GM12878 (cell line): ENCODE measurements at regions of chr16 and their contacts with region 1.

Region 1: DNA sequence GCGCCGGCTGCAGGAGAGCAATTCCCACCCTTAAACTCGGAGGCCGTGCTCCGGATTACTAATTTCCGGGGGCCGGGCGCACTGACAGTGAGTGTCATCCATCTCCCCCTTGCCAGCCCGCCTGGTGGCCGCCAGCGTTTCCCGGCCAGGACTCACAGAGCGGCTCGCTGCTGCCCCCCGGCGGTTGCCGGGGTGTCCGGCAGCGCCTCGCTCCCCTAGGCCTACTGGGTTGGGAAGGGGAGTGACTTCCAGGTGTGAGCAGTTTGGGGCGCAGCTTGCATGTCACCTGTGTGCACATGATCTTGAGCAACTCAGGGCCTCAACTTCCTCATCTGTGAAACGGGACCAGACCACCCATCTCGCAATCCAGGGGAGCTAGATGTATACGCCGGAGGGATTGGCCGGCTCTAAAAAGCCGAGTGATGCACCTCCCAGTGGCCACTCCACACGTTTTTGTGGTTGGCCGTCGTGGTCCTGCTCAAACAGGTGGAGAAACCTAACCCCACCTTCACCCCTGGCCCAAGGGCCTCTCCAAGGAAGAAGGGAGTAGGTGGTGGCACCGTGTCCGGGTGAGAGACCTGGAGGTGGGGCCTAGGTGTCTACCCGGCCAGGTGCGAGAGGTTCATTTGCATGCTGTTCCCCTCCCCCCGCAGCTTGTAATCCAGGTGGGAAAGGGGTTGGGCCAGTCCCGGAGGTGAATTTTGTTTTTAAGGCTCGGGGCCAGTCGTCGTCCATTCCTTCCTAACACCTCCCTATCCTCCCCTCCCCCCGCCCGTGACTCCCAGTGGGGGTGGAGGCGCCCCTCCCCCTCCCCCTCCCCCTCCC is 2.4 kb upstream of the GSE1 start:
- DNase-seq: no peak
- ATAC-seq: peak; percentile 70
- H3K4me3 ChIP-seq: peak overlapping the region; percentile 70; the same call in 1 of the 2 replicates
- H3K27ac ChIP-seq: no peak overlapping the region
- H3K4me1 ChIP-seq: peaks cover 35% of the 10 kb centered on the region
- H3K27me3 ChIP-seq: no peaks in the 10 kb centered on the region
- CTCF ChIP-seq: peak; percentile 96 to 99 (median 97)
- EP300 ChIP-seq: no peak
- POLR2A ChIP-seq: no peak
- RAD21 ChIP-seq: peak; percentile 93

Region 2: GRCh38 chr16:85270374-85270773 is 340.3 kb before region 1 on chr16:
- CTCF ChIA-PET with region 1: no interaction called
- POLR2A ChIA-PET with region 1: no interaction called
- RAD21 ChIA-PET with region 1: no interaction called
- SMC1A ChIA-PET with region 1: no interaction called
- in situ Hi-C with region 1: no loop called
- intact Hi-C with region 1: no loop called
- DNase-seq: no peak
- ATAC-seq: no peak
- H3K4me3 ChIP-seq: no peak overlapping the region
- H3K27ac ChIP-seq: no peak overlapping the region
- H3K4me1 ChIP-seq: no peaks in the 10 kb centered on the region
- H3K27me3 ChIP-seq: no peaks in the 10 kb centered on the region; a peak in 1 of 4 replicates
- CTCF ChIP-seq: no peak
- EP300 ChIP-seq: no peak
- POLR2A ChIP-seq: no peak
- RAD21 ChIP-seq: no peak

Region 3: DNA sequence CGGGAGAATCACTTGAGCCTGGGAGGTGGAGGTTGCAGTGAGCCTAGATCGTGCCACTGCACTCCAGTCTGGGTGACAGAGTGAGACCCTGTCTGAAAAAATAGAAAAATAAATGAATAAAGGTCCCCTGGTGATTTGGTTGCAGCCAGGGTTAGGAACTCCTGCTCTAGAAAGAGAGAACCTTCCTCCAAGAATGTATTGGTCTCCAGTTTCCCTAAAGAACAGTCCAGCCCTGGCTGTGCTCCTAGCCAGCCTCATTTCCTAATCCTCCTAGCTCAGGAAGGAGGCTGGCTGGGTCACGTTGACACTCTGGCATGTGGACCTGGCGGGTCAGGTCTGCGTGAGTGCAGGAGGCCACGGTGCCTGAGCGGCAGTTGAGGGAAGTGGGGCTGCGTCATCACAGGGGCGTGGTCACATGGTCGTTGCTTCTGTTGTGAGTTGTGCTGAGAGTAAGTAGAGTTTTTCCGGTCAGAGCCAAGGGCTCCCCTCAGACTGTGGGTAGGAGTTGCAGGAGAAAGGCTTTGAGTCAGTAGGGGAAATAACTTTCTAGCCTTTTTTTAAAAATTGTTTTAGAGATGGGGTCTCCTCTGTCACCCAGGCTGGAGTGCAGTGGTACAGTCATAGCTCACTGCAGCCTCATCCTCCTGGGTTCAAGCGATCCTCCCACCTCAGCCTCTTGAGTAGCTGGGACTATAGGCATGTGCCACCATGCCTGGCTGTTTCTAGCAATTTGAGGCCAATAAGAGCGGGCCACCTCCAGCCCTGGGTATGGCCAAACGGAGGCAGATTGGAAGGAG is 304.5 kb before region 1 on chr16:
- CTCF ChIA-PET with region 1: no interaction called
- POLR2A ChIA-PET with region 1: no interaction called
- RAD21 ChIA-PET with region 1: no interaction called
- SMC1A ChIA-PET with region 1: no interaction called
- in situ Hi-C with region 1: no loop called
- intact Hi-C with region 1: loop called (anchors 5 kb)
- DNase-seq: peak; percentile 30
- ATAC-seq: peak; percentile 69
- H3K4me3 ChIP-seq: no peak overlapping the region
- H3K27ac ChIP-seq: no peak overlapping the region
- H3K4me1 ChIP-seq: peaks cover 22% of the 10 kb centered on the region
- H3K27me3 ChIP-seq: peaks cover 0 to 2% of the 10 kb centered on the region in 2 experiments; a peak in 1 of 4 replicates
- CTCF ChIP-seq: no peak
- EP300 ChIP-seq: no peak
- POLR2A ChIP-seq: no peak; the same call in 1 of the 2 replicates
- RAD21 ChIP-seq: no peak

Region 4: DNA sequence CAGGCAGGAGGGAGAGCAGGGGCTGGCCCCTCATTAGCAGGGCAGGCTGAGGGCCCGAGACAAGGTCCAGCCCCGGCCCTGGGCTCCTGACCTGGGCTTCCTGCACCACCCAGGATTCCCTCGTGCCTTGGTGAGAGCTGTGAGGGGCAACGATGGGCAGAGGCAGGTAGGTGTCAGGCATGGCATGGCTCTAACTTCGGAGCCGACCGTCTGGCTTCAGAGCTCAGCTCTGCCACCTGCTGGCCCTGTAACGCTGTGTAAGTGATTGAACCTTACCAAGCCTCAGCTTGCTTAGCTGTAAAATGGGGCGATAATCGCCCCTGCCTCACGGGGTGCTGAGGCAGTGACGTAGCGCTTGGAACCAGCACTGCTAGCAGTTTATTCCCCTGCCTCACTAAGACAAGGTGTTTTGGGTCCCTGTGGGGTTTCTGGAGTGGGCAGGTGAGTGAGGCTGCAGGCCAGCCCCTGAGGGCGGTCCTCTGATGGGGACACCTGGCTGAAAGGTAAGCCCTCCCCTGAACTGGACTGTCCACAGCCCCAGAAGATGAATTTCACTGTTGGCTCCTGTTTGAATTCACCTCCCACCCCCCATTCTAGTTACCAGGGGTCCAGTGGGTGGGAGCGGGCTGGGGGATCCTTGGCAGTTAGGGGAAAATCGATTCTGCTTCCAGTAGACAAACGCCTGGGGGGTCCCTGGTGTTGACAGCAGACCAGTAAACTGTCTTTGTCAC is 182.4 kb before region 1 on chr16:
- CTCF ChIA-PET with region 1: interaction called, 17 read pairs
- POLR2A ChIA-PET with region 1: no interaction called
- RAD21 ChIA-PET with region 1: interaction called, 3 read pairs
- SMC1A ChIA-PET with region 1: interaction called, 7 read pairs
- in situ Hi-C with region 1: loop called (anchors 25 kb)
- intact Hi-C with region 1: no loop called
- DNase-seq: no peak
- ATAC-seq: peak; percentile 99
- H3K4me3 ChIP-seq: no peak overlapping the region
- H3K27ac ChIP-seq: no peak overlapping the region
- H3K4me1 ChIP-seq: no peaks in the 10 kb centered on the region
- H3K27me3 ChIP-seq: peaks cover 0 to 3% of the 10 kb centered on the region in 2 experiments; a peak in 2 of 4 replicates
- CTCF ChIP-seq: peak; percentile 61 to 66 (median 62)
- EP300 ChIP-seq: no peak
- POLR2A ChIP-seq: no peak
- RAD21 ChIP-seq: 0 out of 2 replicates have a peak, but pooled peaks have one; percentile 25

Region 5: DNA sequence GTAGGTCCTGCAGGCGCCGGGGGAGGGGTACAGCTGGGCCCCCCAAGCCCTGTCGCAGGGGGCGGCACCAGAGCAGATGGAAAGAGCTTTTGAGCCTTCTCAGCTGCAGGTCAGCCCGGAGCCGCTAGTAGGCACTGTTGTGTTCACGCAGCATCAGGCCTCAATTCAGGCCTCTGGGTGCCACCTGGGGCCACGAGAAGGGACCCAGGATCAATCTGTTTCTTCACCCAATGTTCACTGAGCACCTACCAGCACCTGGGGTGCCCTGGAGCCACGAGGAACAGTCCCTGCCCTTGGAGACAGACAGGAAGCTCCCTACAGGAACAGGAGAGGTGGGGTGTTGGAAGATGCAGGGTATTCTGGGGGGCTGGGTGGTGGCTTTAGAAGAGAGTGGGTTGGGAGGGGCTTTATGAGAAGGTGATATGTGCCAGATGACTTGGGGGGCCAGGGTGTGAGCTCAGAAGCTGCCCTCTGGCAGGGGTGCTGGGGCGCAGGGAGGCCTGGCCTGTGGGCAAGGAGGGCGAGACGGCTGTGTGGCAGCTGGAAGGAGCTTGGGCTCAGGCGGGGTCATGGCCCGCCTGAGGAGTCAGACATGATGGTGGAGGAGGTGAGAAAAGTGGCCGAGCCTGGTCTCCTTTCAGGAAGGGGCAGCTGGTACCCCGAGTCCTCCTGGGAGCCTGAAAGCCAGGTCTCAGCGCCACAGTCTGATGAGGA is 119.5 kb before region 1 on chr16:
- CTCF ChIA-PET with region 1: interaction called, 26 read pairs
- POLR2A ChIA-PET with region 1: no interaction called
- RAD21 ChIA-PET with region 1: interaction called, 19 read pairs
- SMC1A ChIA-PET with region 1: interaction called, 9 read pairs
- in situ Hi-C with region 1: loop called (anchors 5 kb)
- intact Hi-C with region 1: loop called (anchors 1 kb)
- DNase-seq: no peak
- ATAC-seq: peak; percentile 86
- H3K4me3 ChIP-seq: no peak overlapping the region
- H3K27ac ChIP-seq: no peak overlapping the region
- H3K4me1 ChIP-seq: peaks cover 3% of the 10 kb centered on the region; the same call in 1 of the 2 replicates
- H3K27me3 ChIP-seq: peaks cover 0 to 2% of the 10 kb centered on the region in 2 experiments; a peak in 1 of 4 replicates
- CTCF ChIP-seq: peak; percentile 72 to 98 (median 98)
- EP300 ChIP-seq: no peak
- POLR2A ChIP-seq: no peak
- RAD21 ChIP-seq: peak; percentile 67

Region 6: GRCh38 chr16:85569615-85570212 is 41.0 kb before region 1 on chr16:
- CTCF ChIA-PET with region 1: interaction called, 15 read pairs
- POLR2A ChIA-PET with region 1: interaction called, 18 read pairs
- RAD21 ChIA-PET with region 1: interaction called, 15 read pairs
- SMC1A ChIA-PET with region 1: interaction called, 14 read pairs
- in situ Hi-C with region 1: no loop called
- intact Hi-C with region 1: loop called (anchors 1 kb)
- DNase-seq: peak; percentile 74
- ATAC-seq: peak; percentile 76
- H3K4me3 ChIP-seq: peak overlapping the region; percentile 58
- H3K27ac ChIP-seq: peak overlapping the region; percentile 99
- H3K4me1 ChIP-seq: peaks cover 45% of the 10 kb centered on the region
- H3K27me3 ChIP-seq: no peaks in the 10 kb centered on the region
- CTCF ChIP-seq: no peak
- EP300 ChIP-seq: peak; percentile 32 to 33; a peak in 1 of 4 replicates
- POLR2A ChIP-seq: peak; percentile 74
- RAD21 ChIP-seq: no peak